ENCODE measurements at regions of chr3 and their contacts with region 1.

Region 1: DNA sequence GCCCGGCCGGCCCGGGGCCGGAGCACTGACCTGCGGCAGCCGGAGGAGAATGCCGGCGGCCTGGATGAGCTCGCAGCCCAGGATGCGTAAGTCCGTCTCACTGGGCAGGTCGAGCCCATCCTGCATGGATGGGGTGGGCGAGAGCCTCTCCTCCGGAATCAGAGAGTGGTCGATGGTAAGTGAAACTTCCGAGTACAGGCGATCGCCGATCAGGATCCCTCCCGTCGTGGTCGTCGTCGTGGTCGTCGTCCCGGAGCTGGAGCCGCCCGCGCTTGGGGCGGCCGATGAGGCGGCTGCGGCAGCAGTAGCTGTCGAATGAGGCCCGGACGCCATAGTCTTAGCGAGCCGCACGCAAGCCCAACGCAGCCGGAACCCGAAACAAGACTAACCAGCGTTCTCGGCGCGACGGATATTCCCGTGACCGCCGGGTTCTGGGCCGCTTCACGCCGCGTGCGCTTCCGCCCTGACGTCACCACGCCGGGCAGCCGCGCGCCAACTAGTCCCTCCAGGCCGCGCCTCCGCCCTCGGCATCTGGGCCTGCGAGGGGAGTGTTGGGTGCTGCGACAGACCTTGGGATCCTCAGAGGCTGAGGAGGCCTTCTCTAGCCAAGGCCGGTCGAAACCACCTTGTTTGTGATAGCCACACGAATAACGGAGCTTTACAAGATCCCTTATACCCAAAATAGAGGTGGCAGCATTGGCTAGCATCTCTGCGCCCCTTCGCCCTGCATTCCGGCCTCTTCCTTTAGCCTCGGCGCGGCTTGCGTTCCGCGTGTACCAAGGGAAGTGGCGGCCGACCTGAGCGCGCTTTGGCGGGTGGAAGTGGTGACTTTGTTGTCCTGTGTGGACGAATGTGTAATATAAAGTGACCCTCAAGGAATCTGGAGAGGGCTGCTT is at the start of gene CCNL1:
- DNase-seq: peak; percentile 97
- H3K4me3 ChIP-seq: peak within 1 kb of the TSS; percentile 56 to 98 (median 96)
- H3K27ac ChIP-seq: peak within 1 kb of the TSS; percentile 98
- H3K4me1 ChIP-seq: peaks cover 23% of the 10 kb centered on the region
- H3K27me3 ChIP-seq: no peaks in the 10 kb centered on the region
- CTCF ChIP-seq: no peak
- total RNA-seq, gene CCNL1: 127 to 130 TPM

Region 2: GRCh38 chr3:157174649-157175498 is 14.9 kb after region 1 on chr3:
- CTCF ChIA-PET with region 1: interaction called, 4 read pairs
- dilution Hi-C with region 1: no loop called
- in situ Hi-C with region 1: no loop called
- intact Hi-C with region 1: loop called (anchors 1 kb)
- DNase-seq: peak; percentile 99
- H3K4me3 ChIP-seq: peak overlapping the region; percentile 67 to 99 (median 97)
- H3K27ac ChIP-seq: peak overlapping the region; percentile 97
- H3K4me1 ChIP-seq: peaks cover 13% of the 10 kb centered on the region
- H3K27me3 ChIP-seq: peaks cover 1% of the 10 kb centered on the region
- CTCF ChIP-seq: no peak

Region 3: GRCh38 chr3:157239082-157239704 is 79.2 kb after region 1 on chr3:
- CTCF ChIA-PET with region 1: no interaction called
- dilution Hi-C with region 1: no loop called
- in situ Hi-C with region 1: no loop called
- intact Hi-C with region 1: loop called (anchors 1 kb)
- DNase-seq: peak; percentile 35
- H3K4me3 ChIP-seq: no peak overlapping the region
- H3K27ac ChIP-seq: no peak overlapping the region
- H3K4me1 ChIP-seq: no peaks in the 10 kb centered on the region
- H3K27me3 ChIP-seq: no peaks in the 10 kb centered on the region
- CTCF ChIP-seq: peak; percentile 90 to 91

Region 4: GRCh38 chr3:157384491-157384890 is 224.5 kb after region 1 on chr3:
- CTCF ChIA-PET with region 1: no interaction called
- dilution Hi-C with region 1: no loop called
- in situ Hi-C with region 1: no loop called
- intact Hi-C with region 1: no loop called
- DNase-seq: no peak
- H3K4me3 ChIP-seq: no peak overlapping the region
- H3K27ac ChIP-seq: no peak overlapping the region
- H3K4me1 ChIP-seq: no peaks in the 10 kb centered on the region
- H3K27me3 ChIP-seq: no peaks in the 10 kb centered on the region
- CTCF ChIP-seq: no peak

Region 5: GRCh38 chr3:157436583-157437291 is 276.7 kb after region 1 on chr3 and contains the start of gene PTX3:
- CTCF ChIA-PET with region 1: no interaction called
- dilution Hi-C with region 1: no loop called
- in situ Hi-C with region 1: no loop called
- intact Hi-C with region 1: loop called (anchors 5 kb)
- DNase-seq: peak; percentile 71
- H3K4me3 ChIP-seq: peak within 1 kb of the TSS; percentile 16 to 40 (median 26)
- H3K27ac ChIP-seq: no peak within 1 kb of the TSS
- H3K4me1 ChIP-seq: peaks cover 18% of the 10 kb centered on the region
- H3K27me3 ChIP-seq: peaks cover 5% of the 10 kb centered on the region
- CTCF ChIP-seq: no peak
- total RNA-seq, gene PTX3: 0.83 to 1.7 TPM